CD4-positive, alpha-beta T cell (primary cell): ENCODE measurements at regions of chr19 and their contacts with region 1.

Region 1: DNA sequence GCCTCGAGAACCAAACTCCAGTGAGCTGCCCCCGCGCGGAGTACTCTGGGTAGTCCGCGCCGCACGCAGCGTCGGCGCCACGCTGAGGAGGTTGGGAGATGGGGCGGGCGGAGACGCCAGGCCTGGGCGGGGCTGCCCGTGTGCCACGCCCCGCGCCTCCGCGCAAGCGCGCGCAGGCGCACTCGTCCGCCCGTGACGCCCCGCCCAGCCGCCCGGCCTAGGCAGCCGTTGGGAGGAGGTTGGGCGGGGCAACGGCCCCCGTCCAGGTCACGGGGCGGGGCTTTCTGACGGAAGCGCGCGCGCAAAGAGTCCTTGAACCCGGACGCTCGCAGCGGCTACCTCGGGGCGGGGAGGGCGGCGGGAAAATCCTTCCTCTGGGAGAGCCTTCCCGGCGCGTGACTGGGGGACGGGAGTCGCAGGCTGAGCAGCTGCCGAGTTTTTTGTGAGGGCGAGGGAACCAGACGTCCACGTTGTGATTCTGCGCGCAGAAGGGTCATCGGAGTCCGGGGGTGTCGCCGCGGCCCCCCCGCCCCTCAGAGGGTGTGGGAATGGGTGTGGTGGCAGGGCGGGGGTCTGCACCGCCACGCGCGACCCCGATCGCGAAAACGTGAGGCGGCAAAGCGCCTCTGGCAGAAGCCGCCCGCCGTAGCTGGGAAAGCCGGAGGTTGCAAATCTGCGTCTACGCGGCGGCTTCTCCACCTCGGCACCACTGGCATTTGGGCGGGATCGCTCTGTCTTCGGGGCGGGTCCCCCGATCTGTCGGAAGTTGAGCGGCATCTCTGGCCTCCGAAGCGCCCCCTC is at the start of gene MED26:
- DNase-seq: peak; percentile 90 to 98 (median 96)
- ATAC-seq: peak; percentile 88
- H3K4me3 ChIP-seq: peak within 1 kb of the TSS; percentile 99
- H3K4me3 Mint-ChIP-seq: peak within 1 kb of the TSS; percentile 99
- H3K27ac ChIP-seq: peak within 1 kb of the TSS; percentile 94 to 98
- H3K27ac Mint-ChIP-seq: peak within 1 kb of the TSS; percentile 96
- H3K4me1 ChIP-seq: peaks cover 43% of the 10 kb centered on the region
- H3K4me1 Mint-ChIP-seq: peaks cover 50% of the 10 kb centered on the region
- H3K27me3 ChIP-seq: no peaks in the 10 kb centered on the region
- H3K27me3 Mint-ChIP-seq: no peaks in the 10 kb centered on the region
- CTCF ChIP-seq: no peak
- total RNA-seq, gene MED26: 50.4 to 52.4 TPM

Region 2: DNA sequence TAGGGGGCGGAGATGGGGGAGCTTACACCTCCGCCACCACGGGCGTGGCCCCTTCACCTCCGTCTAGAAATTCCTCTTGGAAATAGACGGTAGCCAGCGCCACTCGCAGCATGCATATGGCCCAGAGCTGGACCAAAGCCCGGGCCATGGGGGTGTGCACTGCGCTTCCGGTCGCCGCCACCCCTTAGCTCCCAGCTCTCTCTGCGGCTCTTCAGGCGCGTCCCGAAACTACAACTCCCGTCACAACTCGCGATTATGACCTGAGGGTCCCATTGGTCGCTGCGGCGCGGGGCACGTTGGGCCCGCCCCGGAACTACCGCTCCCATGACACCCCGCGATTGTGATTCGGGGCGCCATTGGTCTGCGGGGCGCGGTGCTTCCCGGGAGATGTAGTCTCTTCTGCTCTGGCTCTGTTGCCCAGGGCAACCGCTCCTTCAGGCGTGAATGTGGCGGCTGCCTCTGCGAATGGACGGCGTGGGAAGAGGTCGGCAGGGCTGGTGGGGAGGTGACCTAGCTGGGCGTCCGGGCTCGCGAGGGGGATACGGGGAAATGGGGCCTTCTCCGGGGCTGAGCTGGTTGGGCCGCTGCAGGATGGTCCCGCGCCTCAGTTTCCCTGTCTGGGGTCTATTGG is 132.3 kb before region 1 on chr19 and contains the starts of genes C19orf44 and CALR3:
- CTCF ChIA-PET with region 1: interaction called, 4 read pairs
- POLR2A ChIA-PET with region 1: no interaction called
- intact Hi-C with region 1: loop called in 1 of 2 experiments (anchors 1 kb)
- DNase-seq: peak; percentile 93 to 98 (median 96)
- ATAC-seq: peak; percentile 99
- H3K4me3 ChIP-seq: peak within 1 kb of the TSS; percentile 64
- H3K4me3 Mint-ChIP-seq: peak within 1 kb of the TSS; percentile 90
- H3K27ac ChIP-seq: no peak within 1 kb of the TSS
- H3K27ac Mint-ChIP-seq: peak within 1 kb of the TSS; percentile 71
- H3K4me1 ChIP-seq: peaks cover 15% of the 10 kb centered on the region
- H3K4me1 Mint-ChIP-seq: peaks cover 14% of the 10 kb centered on the region
- H3K27me3 ChIP-seq: no peaks in the 10 kb centered on the region
- H3K27me3 Mint-ChIP-seq: no peaks in the 10 kb centered on the region
- CTCF ChIP-seq: no peak
- total RNA-seq, gene C19orf44: 0.78 to 1.0 TPM
- total RNA-seq, gene CALR3: not detected

Region 3: GRCh38 chr19:16566161-16566560 is 62.2 kb before region 1 on chr19:
- CTCF ChIA-PET with region 1: no interaction called
- POLR2A ChIA-PET with region 1: interaction called, 16 read pairs
- intact Hi-C with region 1: loop called in 1 of 2 experiments (anchors 1 kb)
- DNase-seq: peak; percentile 72 to 96 (median 81)
- ATAC-seq: peak; percentile 98
- H3K4me3 ChIP-seq: peak overlapping the region; percentile 15
- H3K4me3 Mint-ChIP-seq: peak overlapping the region; percentile 89
- H3K27ac ChIP-seq: peak overlapping the region; percentile 83 to 84
- H3K27ac Mint-ChIP-seq: peak overlapping the region; percentile 96
- H3K4me1 ChIP-seq: peaks cover 64% of the 10 kb centered on the region
- H3K4me1 Mint-ChIP-seq: peaks cover 48% of the 10 kb centered on the region
- H3K27me3 ChIP-seq: no peaks in the 10 kb centered on the region
- H3K27me3 Mint-ChIP-seq: no peaks in the 10 kb centered on the region
- CTCF ChIP-seq: no peak

Region 4: DNA sequence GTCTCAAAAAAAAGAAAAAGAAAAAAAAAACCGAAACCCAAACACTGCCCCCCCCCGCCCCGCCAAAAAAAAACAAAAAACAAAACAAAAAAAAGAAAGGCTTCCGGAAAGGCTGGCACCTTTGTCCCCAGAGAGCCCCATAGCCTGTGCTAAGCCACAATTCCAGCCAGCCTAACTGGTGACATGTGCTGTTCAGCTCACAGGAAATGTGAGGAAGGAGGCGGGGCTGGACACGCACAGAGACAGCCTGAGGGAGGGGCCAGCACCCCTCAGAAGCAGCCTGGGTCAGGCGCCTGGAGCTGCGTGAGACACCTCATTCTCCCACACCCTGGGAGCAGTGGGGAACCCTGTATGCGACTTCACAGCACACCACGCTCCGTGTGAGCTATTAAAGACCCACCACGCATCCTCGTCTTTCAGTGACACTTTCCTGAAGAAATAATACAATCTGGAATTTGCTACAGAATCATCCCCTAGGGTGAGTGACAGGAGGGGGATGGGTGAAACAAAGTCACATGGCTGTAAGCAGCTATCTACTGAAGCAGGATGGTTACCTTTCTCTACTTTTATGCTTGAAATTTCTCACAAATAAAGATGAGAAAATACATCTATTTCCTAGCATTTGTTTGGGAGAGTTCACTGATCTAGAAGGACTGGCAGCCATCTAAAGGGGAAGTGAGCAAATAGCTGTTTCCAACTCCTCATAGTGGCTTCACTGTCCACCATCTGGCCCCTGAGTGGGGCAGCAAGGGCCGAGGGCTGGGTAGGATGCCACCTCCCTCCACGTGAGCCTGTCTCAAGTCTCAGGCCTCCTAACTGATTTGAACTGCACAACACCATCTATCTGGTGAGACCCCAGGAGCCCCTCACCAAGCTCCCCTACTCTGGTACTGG is 43.9 kb before region 1 on chr19:
- CTCF ChIA-PET with region 1: interaction called, 5 read pairs
- POLR2A ChIA-PET with region 1: interaction called, 32 read pairs
- intact Hi-C with region 1: loop called (anchors 1 kb)
- DNase-seq: peak; percentile 74 to 98 (median 88)
- ATAC-seq: peak; percentile 78
- H3K4me3 ChIP-seq: peak overlapping the region; percentile 46
- H3K4me3 Mint-ChIP-seq: peak overlapping the region; percentile 81
- H3K27ac ChIP-seq: peak overlapping the region; percentile 77 to 85
- H3K27ac Mint-ChIP-seq: peak overlapping the region; percentile 98
- H3K4me1 ChIP-seq: peaks cover 90% of the 10 kb centered on the region
- H3K4me1 Mint-ChIP-seq: peaks cover 81% of the 10 kb centered on the region
- H3K27me3 ChIP-seq: no peaks in the 10 kb centered on the region
- H3K27me3 Mint-ChIP-seq: no peaks in the 10 kb centered on the region
- CTCF ChIP-seq: no peak

Region 5: DNA sequence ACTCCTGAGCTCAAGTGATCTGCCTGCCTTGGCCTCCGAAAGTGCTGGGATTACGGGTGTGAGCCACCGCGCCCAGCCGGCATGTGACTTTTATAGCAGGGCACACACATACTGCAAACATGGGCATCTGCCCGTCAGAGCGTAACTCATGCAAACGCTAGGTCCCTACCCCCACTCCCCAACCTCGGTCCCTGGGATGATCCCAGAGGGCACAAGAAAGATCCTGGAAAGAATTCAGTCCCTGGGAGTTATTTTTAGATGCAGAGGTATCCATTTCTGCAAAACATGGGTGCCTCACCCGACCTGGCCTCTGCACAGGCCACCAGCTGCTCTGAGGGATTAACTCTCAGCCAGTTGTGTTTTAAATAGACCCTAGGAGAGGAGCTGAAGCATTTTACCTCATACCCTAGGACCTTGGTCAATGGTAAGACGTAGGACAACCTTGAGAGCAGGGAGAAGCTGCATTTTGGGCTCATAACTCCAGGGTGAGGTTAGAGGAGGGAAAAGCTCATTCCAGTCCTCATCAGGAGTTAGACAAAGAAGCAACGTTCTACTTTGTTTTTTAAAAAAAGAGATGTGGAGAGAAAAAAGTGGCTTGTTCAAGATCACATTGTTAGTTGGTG is 43.4 kb after region 1 on chr19:
- CTCF ChIA-PET with region 1: no interaction called
- POLR2A ChIA-PET with region 1: no interaction called
- intact Hi-C with region 1: no loop called
- DNase-seq: no peak
- ATAC-seq: no peak
- H3K4me3 ChIP-seq: no peak overlapping the region
- H3K4me3 Mint-ChIP-seq: no peak overlapping the region
- H3K27ac ChIP-seq: no peak overlapping the region
- H3K27ac Mint-ChIP-seq: no peak overlapping the region
- H3K4me1 ChIP-seq: no peaks in the 10 kb centered on the region
- H3K4me1 Mint-ChIP-seq: no peaks in the 10 kb centered on the region
- H3K27me3 ChIP-seq: no peaks in the 10 kb centered on the region
- H3K27me3 Mint-ChIP-seq: peaks cover 3% of the 10 kb centered on the region
- CTCF ChIP-seq: no peak